H1 (cell line): ENCODE measurements at regions of chr15 and their contacts with region 1.

Region 1: GRCh38 chr15:92077353-92078085 is 224.0 kb downstream of the SLCO3A1 start:
- DNase-seq: peak; percentile 38 to 80
- H3K4me3 ChIP-seq: no peak overlapping the region
- H3K27ac ChIP-seq: no peak overlapping the region
- H3K4me1 ChIP-seq: peaks cover 0 to 2% (median 0%) of the 10 kb centered on the region in 4 experiments; a peak in 2 of 7 replicates
- H3K27me3 ChIP-seq: no peaks in the 10 kb centered on the region
- CTCF ChIP-seq: peak; percentile 93 to 97 (median 96)
- EP300 ChIP-seq: no peak
- POLR2A ChIP-seq: no peak
- RAD21 ChIP-seq: peak; percentile 97 to 99

Region 2: DNA sequence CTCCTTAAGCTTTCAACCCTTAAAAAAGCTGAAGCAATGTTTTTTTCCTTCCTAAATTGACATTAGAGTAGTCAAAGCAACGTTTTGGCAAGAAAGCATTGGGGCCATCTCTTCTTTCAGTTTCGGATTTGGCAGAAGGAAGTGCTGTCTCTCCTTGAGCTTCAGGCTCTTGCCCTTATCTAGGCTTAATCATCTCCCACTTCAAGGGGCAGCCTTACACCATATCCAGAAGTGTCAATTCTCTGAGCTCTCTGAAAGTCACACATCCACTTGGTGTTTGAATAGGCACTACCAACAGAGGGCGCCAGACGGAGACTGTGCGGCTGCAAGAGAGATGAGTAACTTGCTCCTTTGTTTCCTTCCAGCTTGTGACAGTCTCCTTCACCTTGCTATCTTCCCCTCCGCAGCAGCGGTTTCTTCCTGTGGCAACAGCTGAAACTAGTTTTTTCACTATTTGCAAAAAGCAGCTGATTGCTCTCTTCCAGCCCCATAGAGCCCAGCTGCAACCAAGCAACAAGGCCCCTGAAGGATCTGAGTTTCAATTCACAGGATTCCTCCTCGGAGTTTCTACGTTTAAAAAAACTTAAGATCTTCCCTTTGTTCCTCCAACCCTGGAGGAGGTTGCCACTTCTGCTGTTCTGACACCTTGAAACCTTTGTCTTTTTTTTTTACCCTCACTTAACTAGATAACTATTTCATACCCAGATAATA is 371.0 kb before region 1 on chr15:
- CTCF ChIA-PET with region 1: interaction called, 43 read pairs
- POLR2A ChIA-PET with region 1: no interaction called
- DNase-seq: peak; percentile 72 to 87
- H3K4me3 ChIP-seq: no peak overlapping the region
- H3K27ac ChIP-seq: no peak overlapping the region
- H3K4me1 ChIP-seq: peaks cover 0 to 3% (median 0%) of the 10 kb centered on the region in 4 experiments; a peak in 1 of 7 replicates
- H3K27me3 ChIP-seq: no peaks in the 10 kb centered on the region
- CTCF ChIP-seq: peak; percentile 69 to 97 (median 89)
- EP300 ChIP-seq: no peak
- POLR2A ChIP-seq: no peak
- RAD21 ChIP-seq: peak; percentile 78 to 86

Region 3: GRCh38 chr15:91885714-91886270 is 191.7 kb before region 1 on chr15:
- CTCF ChIA-PET with region 1: interaction called, 45 read pairs
- POLR2A ChIA-PET with region 1: no interaction called
- DNase-seq: peak in 1 of 2 experiments; percentile 48
- H3K4me3 ChIP-seq: no peak overlapping the region
- H3K27ac ChIP-seq: no peak overlapping the region
- H3K4me1 ChIP-seq: peaks cover 3 to 19% (median 13%) of the 10 kb centered on the region in 4 experiments; a peak in 6 of 7 replicates
- H3K27me3 ChIP-seq: no peaks in the 10 kb centered on the region
- CTCF ChIP-seq: peak; percentile 47 to 51 (median 51); a peak in 3 of 4 replicates
- EP300 ChIP-seq: no peak
- POLR2A ChIP-seq: no peak
- RAD21 ChIP-seq: peak; percentile 69

Region 4: DNA sequence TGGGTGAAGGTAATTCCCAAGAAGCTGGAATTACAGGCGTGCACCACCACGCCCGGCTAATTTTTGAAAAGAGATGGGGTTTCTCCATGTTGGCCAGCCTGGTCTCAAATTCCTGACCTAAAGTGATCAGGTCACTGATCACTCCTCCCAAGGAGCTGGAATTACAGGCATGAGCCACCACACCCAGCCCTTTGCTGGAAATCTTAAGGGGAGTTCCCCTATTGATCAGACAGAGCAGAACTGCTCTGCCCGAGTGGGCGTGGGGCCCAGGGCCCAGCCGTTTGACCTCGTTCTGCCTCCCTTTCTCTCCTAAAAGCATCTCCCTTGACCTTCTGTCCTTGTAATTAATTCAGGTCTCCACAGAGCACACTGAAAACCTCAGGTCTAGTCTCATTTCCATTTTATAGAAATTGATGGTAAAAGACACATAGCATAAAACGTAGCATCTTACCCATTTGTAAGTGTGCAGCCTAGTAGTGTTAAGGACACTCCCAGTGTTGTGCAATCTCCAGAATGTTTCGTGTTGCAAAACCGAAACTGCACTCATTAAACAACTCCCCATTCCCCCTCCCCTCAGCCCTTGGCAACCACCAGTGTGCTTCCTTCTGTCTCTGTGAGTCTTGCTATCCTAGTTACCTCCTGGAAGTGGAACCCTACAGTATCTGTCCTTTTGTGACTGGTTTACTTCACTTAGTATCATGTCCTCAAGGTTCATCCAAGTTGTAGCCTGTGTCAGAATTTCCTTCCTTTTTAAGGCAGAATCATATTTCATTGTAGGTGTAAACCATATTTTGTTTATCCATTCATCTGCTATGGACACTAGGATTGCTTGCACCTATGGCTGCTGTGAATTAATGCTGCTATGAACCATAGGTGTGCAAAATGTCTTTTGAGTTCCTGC is 134.6 kb before region 1 on chr15:
- CTCF ChIA-PET with region 1: interaction called, 34 read pairs
- POLR2A ChIA-PET with region 1: no interaction called
- DNase-seq: no peak
- H3K4me3 ChIP-seq: no peak overlapping the region
- H3K27ac ChIP-seq: no peak overlapping the region
- H3K4me1 ChIP-seq: peaks cover 16 to 28% (median 22%) of the 10 kb centered on the region in 4 experiments
- H3K27me3 ChIP-seq: no peaks in the 10 kb centered on the region
- CTCF ChIP-seq: no peak
- EP300 ChIP-seq: no peak
- POLR2A ChIP-seq: no peak
- RAD21 ChIP-seq: no peak

Region 5: DNA sequence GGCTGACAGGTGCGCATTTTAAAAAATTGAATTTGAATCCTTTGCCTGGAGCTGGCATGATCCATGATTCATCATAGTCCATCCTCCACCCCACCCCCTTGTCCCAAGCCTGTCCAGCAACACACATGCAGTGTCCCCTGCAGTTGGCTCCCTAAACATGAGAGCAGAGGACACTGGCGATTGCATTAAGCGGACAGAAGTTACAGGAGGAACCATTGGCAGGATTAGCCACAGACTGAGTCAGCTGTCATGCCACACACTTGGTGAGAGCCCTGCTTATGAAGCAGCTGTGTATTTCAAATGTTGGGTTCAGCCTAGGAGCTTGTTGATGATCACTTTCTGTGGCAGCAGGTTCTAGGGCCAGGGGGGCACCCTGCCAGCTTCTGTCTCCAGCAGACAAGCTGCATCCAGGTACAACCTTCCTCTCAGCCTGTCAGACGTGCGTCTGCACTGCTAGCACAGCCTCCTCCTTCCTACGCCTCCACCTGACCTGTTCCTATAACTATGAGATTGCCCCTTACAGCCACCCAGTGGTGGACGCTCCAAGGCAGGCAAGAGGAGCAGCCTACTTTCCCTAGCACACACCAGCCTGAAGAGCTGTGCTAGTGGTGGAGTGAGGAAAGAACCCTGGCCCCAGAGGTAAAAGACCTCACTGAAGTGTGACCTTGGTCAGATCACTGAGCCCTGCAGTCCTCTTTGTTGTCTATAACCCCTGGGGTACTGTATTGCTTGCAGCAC is 102.1 kb before region 1 on chr15:
- CTCF ChIA-PET with region 1: interaction called, 79 read pairs
- POLR2A ChIA-PET with region 1: no interaction called
- DNase-seq: no peak
- H3K4me3 ChIP-seq: no peak overlapping the region
- H3K27ac ChIP-seq: no peak overlapping the region
- H3K4me1 ChIP-seq: peaks cover 0 to 3% (median 0%) of the 10 kb centered on the region in 4 experiments; a peak in 3 of 7 replicates
- H3K27me3 ChIP-seq: no peaks in the 10 kb centered on the region
- CTCF ChIP-seq: peak; percentile 9 to 31 (median 24); a peak in 3 of 4 replicates
- EP300 ChIP-seq: no peak
- POLR2A ChIP-seq: no peak
- RAD21 ChIP-seq: peak; percentile 3 to 29; a peak in 1 of 4 replicates

Region 6: GRCh38 chr15:92059056-92059960 is 18.2 kb before region 1 on chr15:
- CTCF ChIA-PET with region 1: interaction called, 27 read pairs
- POLR2A ChIA-PET with region 1: no interaction called
- DNase-seq: no peak
- H3K4me3 ChIP-seq: no peak overlapping the region
- H3K27ac ChIP-seq: no peak overlapping the region
- H3K4me1 ChIP-seq: no peaks in the 10 kb centered on the region
- H3K27me3 ChIP-seq: no peaks in the 10 kb centered on the region; a peak in 1 of 7 replicates
- CTCF ChIP-seq: no peak
- EP300 ChIP-seq: no peak
- POLR2A ChIP-seq: no peak
- RAD21 ChIP-seq: no peak

Region 7: GRCh38 chr15:92112180-92112579 is 34.7 kb after region 1 on chr15:
- CTCF ChIA-PET with region 1: no interaction called
- POLR2A ChIA-PET with region 1: no interaction called
- DNase-seq: no peak
- H3K4me3 ChIP-seq: no peak overlapping the region
- H3K27ac ChIP-seq: no peak overlapping the region
- H3K4me1 ChIP-seq: peaks cover 7 to 19% (median 14%) of the 10 kb centered on the region in 4 experiments; a peak in 6 of 7 replicates
- H3K27me3 ChIP-seq: no peaks in the 10 kb centered on the region
- CTCF ChIP-seq: no peak
- EP300 ChIP-seq: no peak
- POLR2A ChIP-seq: no peak
- RAD21 ChIP-seq: no peak

Region 8: GRCh38 chr15:92142242-92143232 is 65.0 kb after region 1 on chr15:
- CTCF ChIA-PET with region 1: no interaction called
- POLR2A ChIA-PET with region 1: no interaction called
- DNase-seq: no peak
- H3K4me3 ChIP-seq: no peak overlapping the region
- H3K27ac ChIP-seq: no peak overlapping the region
- H3K4me1 ChIP-seq: peaks cover 0 to 11% (median 1%) of the 10 kb centered on the region in 4 experiments; a peak in 4 of 7 replicates
- H3K27me3 ChIP-seq: no peaks in the 10 kb centered on the region
- CTCF ChIP-seq: no peak
- EP300 ChIP-seq: no peak
- POLR2A ChIP-seq: no peak
- RAD21 ChIP-seq: no peak